ENCODE measurements at regions of chr18 and their contacts with region 1.

Region 1: DNA sequence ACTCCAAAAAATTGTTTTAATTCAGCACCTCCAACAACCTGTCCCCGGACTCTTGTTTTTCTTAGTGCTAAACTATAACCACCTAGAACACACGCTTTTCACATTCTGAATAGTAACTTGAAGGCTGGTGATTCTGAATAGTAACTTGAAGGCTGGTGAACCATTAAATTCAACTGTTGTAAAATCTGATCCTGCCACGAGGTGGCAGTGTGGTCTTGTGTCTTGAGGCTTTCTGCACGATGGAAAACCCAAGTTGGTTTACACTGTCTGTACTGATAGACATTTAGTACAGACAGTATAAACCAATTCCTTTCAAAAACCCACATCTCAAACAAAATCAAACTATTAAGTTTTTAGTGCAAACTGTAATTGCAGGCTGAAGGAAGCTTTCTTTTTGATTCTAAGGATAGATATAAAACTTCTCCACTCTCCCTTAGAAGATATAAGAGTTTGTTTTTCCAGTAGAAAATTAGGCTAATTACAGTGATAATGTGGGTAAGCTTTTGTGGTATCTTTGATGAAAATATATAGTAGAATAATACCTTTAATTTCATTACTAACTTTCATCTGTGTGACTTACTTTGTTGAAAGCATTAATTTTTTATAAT is 57.6 kb downstream of the VAPA start:
- DNase-seq: peak; percentile 47 to 62
- ATAC-seq: peak; percentile 76 to 77
- H3K4me3 ChIP-seq: no peak overlapping the region
- H3K27ac ChIP-seq: no peak overlapping the region
- H3K4me1 ChIP-seq: no peaks in the 10 kb centered on the region
- H3K27me3 ChIP-seq: no peaks in the 10 kb centered on the region
- CTCF ChIP-seq: peak; percentile 60 to 82 (median 77)
- POLR2A ChIP-seq: no peak

Region 2: GRCh38 chr18:10519999-10520935 is 548.9 kb after region 1 on chr18:
- in situ Hi-C with region 1: loop called (anchors 5 to 10 kb)
- intact Hi-C with region 1: loop called (anchors 1 kb)
- DNase-seq: peak; percentile 65 to 72
- ATAC-seq: peak; percentile 76 to 88
- H3K4me3 ChIP-seq: peak overlapping the region in 1 of 4 donors; percentile 23
- H3K27ac ChIP-seq: peak overlapping the region in 1 of 4 donors; percentile 2
- H3K4me1 ChIP-seq: peaks cover 3 to 26% of the 10 kb centered on the region in 2 donors
- H3K27me3 ChIP-seq: no peaks in the 10 kb centered on the region
- CTCF ChIP-seq: peak; percentile 52 to 77 (median 74)
- POLR2A ChIP-seq: no peak

Measured in gastrocnemius medialis (tissue), 4 donors.